Activated naive CD4-positive, alpha-beta T cell treated with anti-CD3 and anti-CD28 coated beads for 36 hours (primary cell): ENCODE measurements at regions of chr12 and their contacts with region 1.

Region 1: GRCh38 chr12:29380536-29381523 is at the start of gene ERGIC2:
- DNase-seq: peak; percentile 95
- H3K4me3 Mint-ChIP-seq: peak within 1 kb of the TSS; percentile 95
- H3K27ac Mint-ChIP-seq: peak within 1 kb of the TSS; percentile 96
- H3K4me1 Mint-ChIP-seq: peaks cover 47% of the 10 kb centered on the region
- H3K27me3 Mint-ChIP-seq: no peaks in the 10 kb centered on the region
- total RNA-seq, gene ERGIC2: 112 to 116 TPM

Region 2: DNA sequence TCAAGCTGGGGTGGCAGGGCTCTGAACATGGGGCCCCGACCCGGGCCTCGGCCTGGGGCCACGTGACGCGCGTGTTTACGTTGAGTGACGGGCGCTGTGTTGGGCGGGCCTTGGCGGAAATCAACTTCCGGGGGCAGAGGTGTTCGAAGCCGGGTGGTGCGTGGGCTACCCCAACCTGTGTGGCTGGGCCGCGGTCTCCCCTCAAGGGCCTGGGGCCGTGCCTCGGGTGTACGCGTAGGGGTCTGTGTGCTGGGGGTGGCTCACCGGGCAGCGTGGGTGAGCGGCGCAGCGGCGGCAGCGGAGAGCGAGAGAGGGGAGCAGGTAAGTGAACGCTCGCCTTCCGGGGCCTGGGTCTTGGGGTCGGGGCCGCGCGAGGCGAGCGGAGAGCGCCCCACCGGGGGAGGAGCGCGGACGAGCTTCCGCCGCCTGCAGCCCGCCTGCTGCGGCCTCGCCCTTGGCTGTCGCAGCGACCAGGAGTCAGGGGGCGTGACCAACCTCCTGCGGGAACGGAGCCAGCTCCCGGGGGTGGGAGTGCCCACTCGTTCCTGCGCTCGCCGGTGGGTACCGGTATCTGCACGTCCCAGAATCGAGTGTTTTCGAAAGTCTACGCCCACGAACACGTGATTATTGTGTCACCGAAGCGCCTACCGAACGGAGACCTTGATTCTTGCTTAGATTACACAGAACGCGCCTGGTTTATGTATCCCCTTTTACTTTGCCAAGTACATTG is 1190.3 kb before region 1 on chr12 and contains the start of gene CCDC91:
- CTCF ChIA-PET with region 1: no interaction called
- intact Hi-C with region 1: loop called (anchors 10 kb)
- DNase-seq: peak; percentile 91
- H3K4me3 Mint-ChIP-seq: peak within 1 kb of the TSS; percentile 96
- H3K27ac Mint-ChIP-seq: peak within 1 kb of the TSS; percentile 97
- H3K4me1 Mint-ChIP-seq: peaks cover 57% of the 10 kb centered on the region
- H3K27me3 Mint-ChIP-seq: no peaks in the 10 kb centered on the region
- total RNA-seq, gene CCDC91: 15.3 to 16.1 TPM

Region 3: DNA sequence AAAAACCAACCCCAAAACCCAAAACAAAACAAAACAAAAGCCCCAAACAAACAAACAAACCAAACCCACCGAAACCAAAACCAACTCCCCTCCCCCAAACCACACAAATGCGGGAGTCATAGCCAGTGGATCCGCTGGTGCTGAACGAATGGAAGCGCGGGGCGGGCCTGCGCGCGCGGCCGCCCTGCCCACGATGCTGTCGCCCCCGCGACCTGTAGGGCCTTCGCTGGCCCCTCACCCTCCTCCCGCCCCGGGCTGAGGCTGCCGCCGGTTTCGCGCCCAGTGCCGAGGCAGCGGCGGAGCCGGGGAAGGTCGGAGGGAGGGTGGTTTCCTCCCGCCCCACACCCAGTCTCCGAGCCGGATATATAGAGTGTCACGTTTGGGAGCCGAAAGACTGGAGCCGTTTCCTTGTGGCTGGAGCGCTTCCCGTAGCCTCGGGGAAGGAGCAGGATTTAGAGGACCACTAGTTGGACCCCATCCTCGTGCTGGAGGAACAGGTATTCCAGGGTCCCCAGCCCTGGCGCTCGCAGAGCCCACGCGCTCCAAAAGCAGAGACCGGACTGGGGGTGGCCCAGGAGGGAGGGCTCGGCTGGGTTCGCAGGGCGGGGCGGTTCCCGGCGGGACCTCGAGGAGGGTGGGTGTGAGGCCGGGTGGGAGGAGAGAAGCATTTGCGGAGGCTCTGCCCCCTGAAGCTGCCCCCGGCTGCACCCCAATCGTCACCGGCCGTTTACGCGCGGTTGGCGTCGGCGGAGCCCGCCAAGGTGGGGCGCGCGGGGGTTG is 231.7 kb before region 1 on chr12 and contains the start of gene FAR2:
- CTCF ChIA-PET with region 1: no interaction called
- intact Hi-C with region 1: loop called (anchors 5 kb)
- DNase-seq: peak; percentile 60
- H3K4me3 Mint-ChIP-seq: peak within 1 kb of the TSS; percentile 87
- H3K27ac Mint-ChIP-seq: peak within 1 kb of the TSS; percentile 59
- H3K4me1 Mint-ChIP-seq: peaks cover 8% of the 10 kb centered on the region
- H3K27me3 Mint-ChIP-seq: peaks cover 13% of the 10 kb centered on the region
- total RNA-seq, gene FAR2: 2.2 to 4.4 TPM

Region 4: GRCh38 chr12:29398495-29398894 is 17.7 kb after region 1 on chr12:
- CTCF ChIA-PET with region 1: no interaction called
- intact Hi-C with region 1: no loop called
- DNase-seq: no peak
- H3K4me3 Mint-ChIP-seq: no peak overlapping the region
- H3K27ac Mint-ChIP-seq: no peak overlapping the region
- H3K4me1 Mint-ChIP-seq: no peaks in the 10 kb centered on the region
- H3K27me3 Mint-ChIP-seq: peaks cover 3% of the 10 kb centered on the region

Region 5: DNA sequence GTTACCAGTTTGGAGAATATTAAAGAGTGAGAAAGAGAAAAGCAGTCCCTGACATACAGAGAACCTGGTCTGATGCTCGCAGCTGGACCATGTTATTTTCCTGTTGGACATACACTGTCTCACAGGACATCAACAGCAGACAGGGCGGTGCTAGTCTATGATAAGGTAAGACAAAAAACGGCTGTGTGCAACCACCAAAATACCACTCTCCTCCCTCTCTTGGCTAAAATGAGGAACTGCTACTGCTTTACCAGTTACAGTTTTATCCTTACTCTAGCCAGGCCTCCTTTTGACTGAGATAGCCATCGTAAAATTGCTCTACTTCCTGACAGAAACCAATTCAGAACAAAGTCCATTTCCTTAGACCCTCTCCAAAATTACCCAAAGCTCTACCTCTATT is 47.1 kb after region 1 on chr12:
- CTCF ChIA-PET with region 1: no interaction called
- intact Hi-C with region 1: loop called (anchors 1 kb)
- DNase-seq: no peak
- H3K4me3 Mint-ChIP-seq: no peak overlapping the region
- H3K27ac Mint-ChIP-seq: no peak overlapping the region
- H3K4me1 Mint-ChIP-seq: peaks cover 9% of the 10 kb centered on the region
- H3K27me3 Mint-ChIP-seq: peaks cover 3% of the 10 kb centered on the region

Region 6: GRCh38 chr12:30695199-30696103 is 1314.6 kb after region 1 on chr12 and contains the start of gene IPO8:
- CTCF ChIA-PET with region 1: no interaction called
- intact Hi-C with region 1: loop called (anchors 1 kb)
- DNase-seq: peak; percentile 89
- H3K4me3 Mint-ChIP-seq: peak within 1 kb of the TSS; percentile 93
- H3K27ac Mint-ChIP-seq: peak within 1 kb of the TSS; percentile 92
- H3K4me1 Mint-ChIP-seq: peaks cover 38% of the 10 kb centered on the region
- H3K27me3 Mint-ChIP-seq: peaks cover 2% of the 10 kb centered on the region
- total RNA-seq, gene IPO8: 36.0 to 41.5 TPM